ENCODE measurements at regions of chr16 and their contacts with region 1.

Region 1: DNA sequence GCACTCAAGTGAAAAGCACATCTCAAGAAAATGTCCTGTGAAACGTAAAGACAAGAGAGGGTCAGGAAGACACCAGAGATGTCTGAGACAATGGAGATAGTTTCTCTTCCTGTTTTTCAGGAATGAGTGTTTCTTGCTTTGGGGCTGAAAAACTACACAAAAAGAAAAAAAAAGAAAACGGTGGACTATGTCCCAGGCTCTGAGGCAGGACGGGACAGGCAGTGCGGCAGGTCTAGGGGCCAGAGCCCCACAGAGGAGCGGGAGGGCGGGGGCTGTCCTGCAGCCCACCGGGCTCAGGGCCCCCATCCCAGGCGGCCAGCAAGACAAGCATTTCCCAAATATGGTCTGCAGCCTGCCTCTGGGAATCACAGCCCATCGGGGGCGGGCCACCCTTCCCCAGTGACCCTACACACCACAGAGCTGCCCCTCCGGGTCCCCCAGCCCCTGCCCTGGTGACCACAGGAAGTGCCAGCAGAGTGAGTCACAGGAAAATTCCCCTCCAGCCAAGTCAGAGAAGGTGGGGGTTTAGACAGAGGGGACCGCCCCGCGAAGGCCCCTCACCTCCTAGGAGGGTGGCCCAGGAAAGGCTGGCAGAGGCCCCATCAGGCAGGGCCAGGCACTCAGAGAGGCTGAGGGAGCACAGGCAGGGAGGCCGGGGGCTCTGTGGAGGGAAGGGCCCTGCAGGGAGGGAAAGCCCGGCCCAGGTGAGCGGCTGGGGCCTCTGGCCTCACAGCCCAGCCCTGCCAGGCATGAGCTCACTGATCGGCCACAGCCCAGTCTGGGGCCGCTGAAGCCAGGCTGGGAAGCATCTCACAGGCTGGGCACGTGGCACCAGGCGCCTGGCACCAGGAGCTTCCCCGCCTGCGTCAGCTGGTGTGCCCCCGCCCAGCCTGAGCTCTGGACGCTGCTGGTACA is 6.3 kb downstream of the BCAR1 start:
- DNase-seq: no peak
- H3K4me3 Mint-ChIP-seq: no peak overlapping the region
- H3K27ac Mint-ChIP-seq: no peak overlapping the region
- H3K4me1 Mint-ChIP-seq: no peaks in the 10 kb centered on the region
- H3K27me3 Mint-ChIP-seq: peaks cover 3% of the 10 kb centered on the region

Region 2: GRCh38 chr16:75148311-75149195 is 96.5 kb before region 1 on chr16 and contains the start of gene ZFP1:
- CTCF ChIA-PET with region 1: no interaction called
- intact Hi-C with region 1: no loop called
- DNase-seq: peak; percentile 97
- H3K4me3 Mint-ChIP-seq: peak within 1 kb of the TSS; percentile 80
- H3K27ac Mint-ChIP-seq: peak within 1 kb of the TSS; percentile 73
- H3K4me1 Mint-ChIP-seq: peaks cover 37% of the 10 kb centered on the region
- H3K27me3 Mint-ChIP-seq: no peaks in the 10 kb centered on the region
- total RNA-seq, gene ZFP1: 20.2 to 20.9 TPM

Region 3: DNA sequence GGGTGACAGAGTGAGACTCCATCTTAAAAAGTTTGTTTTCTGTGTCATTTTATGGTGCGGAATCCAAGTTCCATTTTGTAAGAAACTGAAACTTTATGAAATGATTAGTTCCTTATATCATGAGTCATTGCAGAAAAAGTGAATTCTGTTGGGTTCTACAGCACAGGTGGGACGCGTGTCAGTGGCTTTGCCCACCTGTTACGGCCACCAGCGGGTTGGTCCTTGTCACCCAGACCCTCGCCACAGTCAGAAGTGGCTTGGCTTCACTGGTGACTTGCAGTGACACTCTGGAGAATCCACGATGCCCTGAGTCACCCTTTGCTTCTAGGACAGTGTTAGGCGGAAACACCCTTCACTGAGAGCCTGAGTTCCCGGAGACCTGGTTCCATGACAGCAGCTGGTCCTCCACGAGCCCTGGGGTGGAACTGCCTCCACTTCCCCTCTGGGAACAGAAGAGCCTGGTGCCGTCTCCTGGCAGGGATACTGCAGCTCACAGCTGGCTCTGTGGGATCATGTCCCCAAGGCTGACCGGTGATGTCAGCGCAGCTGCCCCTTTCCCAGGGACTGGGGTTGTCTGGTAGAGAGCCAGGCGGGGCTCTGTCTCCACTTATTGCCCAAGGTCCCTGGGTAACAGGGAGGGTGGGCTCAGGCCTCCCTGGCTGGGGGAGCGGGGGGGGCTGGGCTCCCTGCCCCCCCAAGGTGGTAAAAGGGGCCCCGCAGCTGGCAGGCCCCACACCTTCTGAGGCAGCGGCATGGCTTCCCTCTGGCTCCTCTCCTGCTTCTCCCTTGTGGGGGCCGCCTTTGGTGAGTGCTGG is 26.6 kb before region 1 on chr16 and contains the start of gene CTRB1:
- CTCF ChIA-PET with region 1: no interaction called
- intact Hi-C with region 1: no loop called
- DNase-seq: peak; percentile 30
- H3K4me3 Mint-ChIP-seq: peak within 1 kb of the TSS; percentile 19
- H3K27ac Mint-ChIP-seq: peak within 1 kb of the TSS; percentile 74
- H3K4me1 Mint-ChIP-seq: peaks cover 20% of the 10 kb centered on the region
- H3K27me3 Mint-ChIP-seq: no peaks in the 10 kb centered on the region
- total RNA-seq, gene CTRB1: not detected

Region 4: GRCh38 chr16:75326333-75326732 is 81.2 kb after region 1 on chr16:
- CTCF ChIA-PET with region 1: no interaction called
- intact Hi-C with region 1: loop called (anchors 5 kb)
- DNase-seq: no peak
- H3K4me3 Mint-ChIP-seq: no peak overlapping the region
- H3K27ac Mint-ChIP-seq: no peak overlapping the region
- H3K4me1 Mint-ChIP-seq: peaks cover 19% of the 10 kb centered on the region
- H3K27me3 Mint-ChIP-seq: no peaks in the 10 kb centered on the region